ENCODE measurements at regions of chr18 and their contacts with region 1.

Region 1: DNA sequence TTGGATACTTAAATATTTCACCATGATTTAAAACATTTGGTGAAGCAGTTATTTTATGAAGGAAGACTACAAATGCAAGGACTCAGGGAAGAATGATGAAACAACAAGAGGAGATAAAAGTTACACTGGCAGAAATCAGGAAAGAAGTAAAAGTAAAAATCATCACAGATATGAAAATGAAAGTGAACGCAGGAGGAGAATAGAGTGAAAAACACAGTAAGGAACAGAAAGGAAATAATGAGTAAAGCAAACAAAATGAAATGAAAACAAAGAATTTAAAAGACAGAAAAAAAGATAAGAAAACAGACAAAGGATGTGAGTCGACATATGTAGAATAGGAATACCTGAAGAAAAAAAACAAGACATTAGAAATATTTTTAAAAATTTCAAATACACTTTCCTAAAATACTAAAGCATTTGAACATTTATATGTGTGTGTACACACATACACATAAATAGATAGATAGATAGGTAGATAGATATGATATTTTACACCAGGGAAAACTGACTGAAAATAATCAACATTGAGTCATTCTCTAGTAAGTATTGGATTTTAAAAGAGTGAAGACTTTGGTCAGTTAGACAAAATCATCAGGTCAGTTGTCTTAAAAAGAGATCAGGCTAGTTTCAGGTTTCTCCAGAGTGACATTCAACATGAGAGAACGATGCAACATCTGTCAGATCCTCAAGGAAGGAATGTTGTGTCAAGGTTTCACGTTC is 12.1 kb upstream of the KDSR start:
- DNase-seq: no peak
- H3K4me3 Mint-ChIP-seq: peak overlapping the region; percentile 18
- H3K27ac Mint-ChIP-seq: peak overlapping the region; percentile 69
- H3K4me1 Mint-ChIP-seq: peaks cover 23% of the 10 kb centered on the region
- H3K27me3 Mint-ChIP-seq: no peaks in the 10 kb centered on the region

Region 2: DNA sequence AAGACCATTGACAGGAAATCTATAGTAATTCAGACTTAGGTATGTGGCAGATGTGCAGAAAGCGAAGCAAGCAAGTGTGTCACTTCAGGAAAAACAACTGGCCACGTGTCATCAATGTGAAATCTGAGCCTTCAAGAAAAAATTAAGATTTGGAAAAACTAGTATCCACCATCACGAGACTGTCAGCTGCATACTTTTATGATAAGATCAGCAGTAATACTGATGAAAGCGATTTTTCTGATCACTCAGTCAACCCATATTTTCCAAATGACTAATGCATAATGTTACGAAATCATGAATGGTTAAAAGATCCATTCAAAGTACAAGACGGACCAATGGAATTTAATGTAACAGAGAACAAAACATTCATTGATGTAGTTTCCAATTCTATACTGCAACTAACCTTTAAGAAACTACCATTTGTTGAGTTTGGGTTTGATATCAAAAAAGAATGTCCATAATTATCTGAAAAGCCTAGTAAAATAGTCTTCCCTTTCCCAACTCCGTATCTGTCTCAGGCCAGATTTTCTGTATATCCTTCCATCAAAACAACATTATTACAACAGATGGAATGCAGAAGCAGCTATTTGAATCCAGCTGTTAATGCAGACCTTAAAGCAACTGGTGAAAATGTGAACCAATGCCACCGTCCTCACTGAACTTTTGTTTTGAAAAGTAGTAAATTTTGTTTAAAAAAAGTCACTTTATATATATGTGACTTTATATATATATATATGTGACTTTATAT is 42.6 kb before region 1 on chr18:
- intact Hi-C with region 1: no loop called
- DNase-seq: no peak
- H3K4me3 Mint-ChIP-seq: no peak overlapping the region
- H3K27ac Mint-ChIP-seq: no peak overlapping the region
- H3K4me1 Mint-ChIP-seq: peaks cover 15% of the 10 kb centered on the region
- H3K27me3 Mint-ChIP-seq: no peaks in the 10 kb centered on the region

Region 3: DNA sequence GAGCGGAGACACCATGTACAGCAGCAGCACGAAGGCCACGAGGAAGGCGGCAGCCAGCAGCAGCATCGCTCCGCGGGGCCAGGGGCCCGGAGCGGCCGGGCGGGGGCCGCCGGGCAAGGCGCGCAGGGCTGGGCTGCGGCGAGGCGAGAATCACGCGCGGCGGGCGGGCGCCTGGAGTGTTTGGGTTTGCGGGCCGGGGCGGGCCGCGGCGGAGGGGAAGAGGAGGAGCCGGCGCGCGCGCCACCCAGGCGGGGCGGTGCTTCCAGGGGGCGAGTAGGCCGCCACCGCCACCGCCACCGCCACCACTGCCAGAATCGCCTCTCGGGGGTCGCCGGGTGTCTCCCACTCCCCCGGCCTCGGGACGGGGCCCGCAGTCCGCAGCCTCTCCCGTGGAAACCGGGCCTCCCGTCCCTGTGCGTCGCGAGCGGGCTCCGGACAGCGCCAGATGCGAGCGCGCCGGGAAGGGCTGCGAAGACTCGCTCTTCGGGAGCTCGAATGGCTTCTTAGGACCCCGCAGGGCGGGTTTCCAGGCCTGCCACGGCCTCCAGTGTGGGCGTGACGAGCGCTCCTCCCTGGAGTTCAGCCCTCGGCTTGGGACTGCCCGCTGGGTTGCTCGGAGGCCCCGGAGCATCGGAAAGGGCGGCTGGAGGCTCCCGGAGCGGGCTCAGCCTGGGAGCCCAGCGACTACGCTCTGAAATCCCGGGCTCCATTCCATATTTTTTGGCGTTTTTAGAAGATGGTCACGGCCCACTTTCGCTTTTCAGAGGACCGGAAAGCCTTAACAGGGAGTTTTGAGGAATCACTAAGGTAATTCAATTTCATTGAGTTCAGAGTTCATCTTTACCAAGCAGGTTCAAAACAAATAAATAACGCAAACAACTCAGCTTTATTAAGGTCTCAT is 11.8 kb before region 1 on chr18 and contains the start of gene KDSR:
- intact Hi-C with region 1: loop called (anchors 1 kb)
- DNase-seq: peak; percentile 82
- H3K4me3 Mint-ChIP-seq: peak within 1 kb of the TSS; percentile 94
- H3K27ac Mint-ChIP-seq: peak within 1 kb of the TSS; percentile 84
- H3K4me1 Mint-ChIP-seq: peaks cover 28% of the 10 kb centered on the region
- H3K27me3 Mint-ChIP-seq: no peaks in the 10 kb centered on the region
- total RNA-seq, gene KDSR: 73.3 and 76.1 TPM in 2 replicates

Region 4: GRCh38 chr18:63648241-63648640 is 269.2 kb after region 1 on chr18:
- intact Hi-C with region 1: no loop called
- DNase-seq: no peak
- H3K4me3 Mint-ChIP-seq: no peak overlapping the region
- H3K27ac Mint-ChIP-seq: no peak overlapping the region
- H3K4me1 Mint-ChIP-seq: no peaks in the 10 kb centered on the region
- H3K27me3 Mint-ChIP-seq: peaks cover 2% of the 10 kb centered on the region

Region 5: DNA sequence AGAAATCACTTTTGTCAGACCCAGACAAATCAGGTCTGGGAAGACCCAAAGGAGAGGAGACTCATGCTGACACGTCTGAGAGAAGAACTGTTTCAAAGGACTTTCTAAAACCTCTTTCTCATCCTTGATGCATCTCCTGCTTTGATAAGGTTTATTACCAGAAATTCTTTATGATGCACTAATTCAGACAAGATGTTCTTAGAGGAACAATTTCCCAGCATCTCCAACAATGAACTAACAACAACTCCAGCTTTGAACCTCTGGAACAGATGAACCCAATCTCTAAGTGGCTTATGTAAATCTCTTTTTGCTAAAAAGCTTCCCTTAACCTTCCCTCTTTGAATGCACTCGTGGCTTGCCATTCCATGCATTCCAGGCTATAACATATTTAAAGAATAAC is 307.8 kb after region 1 on chr18:
- intact Hi-C with region 1: no loop called
- DNase-seq: no peak
- H3K4me3 Mint-ChIP-seq: no peak overlapping the region
- H3K27ac Mint-ChIP-seq: no peak overlapping the region
- H3K4me1 Mint-ChIP-seq: no peaks in the 10 kb centered on the region
- H3K27me3 Mint-ChIP-seq: no peaks in the 10 kb centered on the region